ENCODE measurements at regions of chr2 and their contacts with region 1.

Region 1: GRCh38 chr2:168210895-168211570 is 36.4 kb downstream of the STK39 start:
- DNase-seq: no peak
- ATAC-seq: peak; percentile 80
- H3K4me3 Mint-ChIP-seq: peak overlapping the region; percentile 58
- H3K27ac Mint-ChIP-seq: peak overlapping the region; percentile 89
- H3K4me1 Mint-ChIP-seq: peaks cover 63% of the 10 kb centered on the region
- H3K27me3 Mint-ChIP-seq: no peaks in the 10 kb centered on the region
- CTCF ChIP-seq: no peak

Region 2: GRCh38 chr2:168166902-168167510 is 44.0 kb before region 1 on chr2:
- CTCF ChIA-PET with region 1: no interaction called
- POLR2A ChIA-PET with region 1: no interaction called
- intact Hi-C with region 1: loop called (anchors 5 kb)
- DNase-seq: peak; percentile 64
- ATAC-seq: peak; percentile 87
- H3K4me3 Mint-ChIP-seq: no peak overlapping the region
- H3K27ac Mint-ChIP-seq: peak overlapping the region; percentile 78
- H3K4me1 Mint-ChIP-seq: peaks cover 63% of the 10 kb centered on the region
- H3K27me3 Mint-ChIP-seq: no peaks in the 10 kb centered on the region
- CTCF ChIP-seq: no peak

Region 3: DNA sequence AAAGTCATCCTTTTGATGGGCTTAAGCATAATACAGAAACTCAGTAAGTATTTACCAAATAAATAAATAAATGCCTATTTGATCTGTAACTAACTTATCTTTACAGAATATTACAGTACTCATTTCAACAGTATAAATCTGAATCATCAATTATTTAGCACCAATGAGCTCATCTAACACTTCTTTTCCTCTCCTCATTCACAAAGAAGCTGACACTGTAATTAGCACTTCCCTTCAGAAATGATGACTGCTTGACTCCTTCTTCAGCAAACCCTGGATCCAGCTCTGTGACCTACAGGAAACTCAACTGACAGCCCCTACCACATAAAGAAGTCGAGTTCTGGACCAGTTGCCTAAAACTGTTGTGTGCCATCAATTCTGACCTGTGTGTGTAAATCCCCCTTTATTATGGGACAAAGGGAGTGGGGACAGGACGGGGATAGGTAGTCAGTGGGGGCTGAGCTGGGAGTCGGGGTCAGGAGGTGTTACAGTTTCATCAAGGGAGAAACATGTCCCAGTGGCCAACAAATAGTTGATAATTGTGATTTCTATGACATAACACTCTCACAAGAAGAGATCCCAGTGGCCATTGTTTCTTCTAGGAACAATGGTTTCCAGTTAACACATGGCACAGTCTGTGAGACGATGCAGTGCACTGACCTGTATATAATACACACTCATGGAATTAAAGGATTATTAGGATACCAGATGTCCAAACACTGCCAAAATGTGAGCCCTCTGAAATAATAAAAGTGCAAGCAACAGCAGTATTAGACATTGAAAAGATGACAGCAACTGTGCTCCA is 32.3 kb before region 1 on chr2:
- CTCF ChIA-PET with region 1: no interaction called
- POLR2A ChIA-PET with region 1: no interaction called
- intact Hi-C with region 1: no loop called
- DNase-seq: no peak
- ATAC-seq: peak; percentile 14
- H3K4me3 Mint-ChIP-seq: no peak overlapping the region
- H3K27ac Mint-ChIP-seq: no peak overlapping the region
- H3K4me1 Mint-ChIP-seq: peaks cover 60% of the 10 kb centered on the region
- H3K27me3 Mint-ChIP-seq: no peaks in the 10 kb centered on the region
- CTCF ChIP-seq: no peak

Region 4: GRCh38 chr2:168194784-168195522 is 16.1 kb before region 1 on chr2:
- CTCF ChIA-PET with region 1: interaction called, 12 read pairs
- POLR2A ChIA-PET with region 1: interaction called, 22 read pairs
- intact Hi-C with region 1: loop called (anchors 1 kb)
- DNase-seq: peak; percentile 63
- ATAC-seq: peak; percentile 81
- H3K4me3 Mint-ChIP-seq: peak overlapping the region; percentile 69
- H3K27ac Mint-ChIP-seq: peak overlapping the region; percentile 98
- H3K4me1 Mint-ChIP-seq: peaks cover 71% of the 10 kb centered on the region
- H3K27me3 Mint-ChIP-seq: no peaks in the 10 kb centered on the region
- CTCF ChIP-seq: no peak

Region 5: DNA sequence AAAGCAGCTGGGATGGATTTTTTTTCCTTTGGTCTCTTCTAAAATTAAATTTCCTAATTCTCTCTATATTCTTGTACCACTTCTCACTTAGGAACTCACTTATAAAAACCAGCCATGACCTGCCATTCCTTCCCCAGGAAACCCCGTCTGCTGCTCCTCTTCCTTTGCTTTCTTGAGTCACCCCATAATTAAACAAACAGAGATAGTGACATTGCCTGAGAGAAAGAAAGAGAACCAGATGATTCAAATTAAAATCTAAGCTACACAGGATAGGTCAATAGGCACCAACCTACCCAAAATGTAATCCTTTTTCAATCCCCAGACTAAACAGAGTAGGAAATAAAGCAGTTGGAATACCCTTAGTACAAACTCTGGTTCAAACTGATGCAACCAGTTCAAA is 26.7 kb after region 1 on chr2:
- CTCF ChIA-PET with region 1: interaction called, 3 read pairs
- POLR2A ChIA-PET with region 1: interaction called, 10 read pairs
- intact Hi-C with region 1: no loop called
- DNase-seq: no peak
- ATAC-seq: no peak
- H3K4me3 Mint-ChIP-seq: no peak overlapping the region
- H3K27ac Mint-ChIP-seq: no peak overlapping the region
- H3K4me1 Mint-ChIP-seq: peaks cover 36% of the 10 kb centered on the region
- H3K27me3 Mint-ChIP-seq: no peaks in the 10 kb centered on the region
- CTCF ChIP-seq: no peak

Region 6: GRCh38 chr2:168246483-168247340 is 35.7 kb after region 1 on chr2:
- CTCF ChIA-PET with region 1: interaction called, 7 read pairs
- POLR2A ChIA-PET with region 1: interaction called, 7 read pairs
- intact Hi-C with region 1: loop called (anchors 2 kb)
- DNase-seq: peak; percentile 86
- ATAC-seq: peak; percentile 43
- H3K4me3 Mint-ChIP-seq: peak overlapping the region; percentile 93
- H3K27ac Mint-ChIP-seq: peak overlapping the region; percentile 94
- H3K4me1 Mint-ChIP-seq: peaks cover 35% of the 10 kb centered on the region
- H3K27me3 Mint-ChIP-seq: no peaks in the 10 kb centered on the region
- CTCF ChIP-seq: no peak